Common myeloid progenitor, CD34-positive (primary cell): ENCODE measurements at regions of chr15 and their contacts with region 1.

Region 1: GRCh38 chr15:65101411-65101890 is 13.5 kb downstream of the UBAP1L start:
- DNase-seq: peak; percentile 57 to 79 (median 71)
- H3K4me3 ChIP-seq: no peak overlapping the region
- H3K27ac ChIP-seq: no peak overlapping the region
- H3K4me1 ChIP-seq: peaks cover 0 to 4% (median 0%) of the 10 kb centered on the region in 4 experiments
- H3K27me3 ChIP-seq: no peaks in the 10 kb centered on the region

Region 2: GRCh38 chr15:64921711-64922110 is 179.7 kb before region 1 on chr15:
- CTCF ChIA-PET with region 1: no interaction called
- POLR2A ChIA-PET with region 1: no interaction called
- DNase-seq: no peak
- H3K4me3 ChIP-seq: no peak overlapping the region
- H3K27ac ChIP-seq: no peak overlapping the region
- H3K4me1 ChIP-seq: peaks cover 0 to 18% (median 2%) of the 10 kb centered on the region in 4 experiments
- H3K27me3 ChIP-seq: no peaks in the 10 kb centered on the region

Region 3: GRCh38 chr15:65049418-65049840 is 52.0 kb before region 1 on chr15:
- CTCF ChIA-PET with region 1: interaction called, 142 read pairs
- POLR2A ChIA-PET with region 1: interaction called, 3 read pairs
- DNase-seq: peak; percentile 91 to 92 (median 92)
- H3K4me3 ChIP-seq: peak overlapping the region in 5 of 7 experiments; percentile 35 to 70 (median 38)
- H3K27ac ChIP-seq: no peak overlapping the region
- H3K4me1 ChIP-seq: peaks cover 0 to 23% (median 19%) of the 10 kb centered on the region in 4 experiments
- H3K27me3 ChIP-seq: no peaks in the 10 kb centered on the region

Region 4: DNA sequence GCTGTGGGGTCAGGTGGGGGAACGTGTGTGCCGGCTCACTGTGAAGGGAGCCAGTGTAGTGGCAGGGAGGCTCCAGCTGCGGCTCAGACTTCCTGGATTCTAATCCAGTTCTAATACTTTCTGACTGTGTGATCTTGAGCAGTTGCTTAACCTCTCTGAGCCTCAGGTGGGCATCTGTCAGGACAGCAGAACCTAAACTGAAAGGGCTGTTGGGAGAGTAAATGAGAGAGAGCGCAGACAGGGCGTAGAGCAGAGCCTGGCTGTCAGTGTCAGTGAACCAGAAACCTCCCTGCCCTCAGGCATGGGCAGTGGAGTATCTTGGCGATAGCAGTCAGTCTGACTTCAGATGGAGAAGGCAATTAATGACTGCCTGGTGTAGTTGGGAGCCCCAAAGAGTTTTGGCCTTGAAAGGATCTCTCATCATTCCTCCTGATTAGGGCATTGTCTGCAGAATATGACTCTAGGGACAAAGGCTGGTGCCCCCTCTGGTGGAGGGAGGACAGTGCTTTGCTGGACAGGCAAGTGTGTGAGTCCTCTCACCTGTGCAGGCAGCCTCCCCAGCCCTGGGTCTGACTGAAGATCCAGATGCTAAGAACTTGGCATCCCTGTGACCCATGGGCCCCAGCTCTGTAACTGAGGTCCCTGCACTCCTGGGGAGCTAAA is 15.3 kb before region 1 on chr15:
- CTCF ChIA-PET with region 1: interaction called, 21 read pairs
- POLR2A ChIA-PET with region 1: no interaction called
- DNase-seq: peak; percentile 25 to 51 (median 46)
- H3K4me3 ChIP-seq: no peak overlapping the region
- H3K27ac ChIP-seq: no peak overlapping the region
- H3K4me1 ChIP-seq: peaks cover 0 to 16% (median 10%) of the 10 kb centered on the region in 4 experiments
- H3K27me3 ChIP-seq: peaks cover 0 to 4% (median 0%) of the 10 kb centered on the region in 5 experiments